Activated naive CD8-positive, alpha-beta T cell treated with anti-CD3 and anti-CD28 coated beads, Interleukin-2, amount 10 ng/mL, durations not matched to agents 7 days and 5 days (primary cell): ENCODE measurements at regions of chr11 and their contacts with region 1.

Region 1: GRCh38 chr11:75204685-75205563 is 35.6 kb upstream of the TPBGL start:
- DNase-seq: peak; percentile 89
- ATAC-seq: peak; percentile 96
- H3K4me3 Mint-ChIP-seq: no peak overlapping the region
- H3K27ac Mint-ChIP-seq: no peak overlapping the region
- H3K4me1 Mint-ChIP-seq: peaks cover 4% of the 10 kb centered on the region
- H3K27me3 Mint-ChIP-seq: peaks cover 10% of the 10 kb centered on the region

Region 2: GRCh38 chr11:75142714-75143419 is 62.1 kb before region 1 on chr11:
- POLR2A ChIA-PET with region 1: interaction called, 46 read pairs
- DNase-seq: peak; percentile 74
- ATAC-seq: peak; percentile 95
- H3K4me3 Mint-ChIP-seq: peak overlapping the region; percentile 73
- H3K27ac Mint-ChIP-seq: peak overlapping the region; percentile 86
- H3K4me1 Mint-ChIP-seq: peaks cover 45% of the 10 kb centered on the region
- H3K27me3 Mint-ChIP-seq: peaks cover 17% of the 10 kb centered on the region